Mammary epithelial cell (primary cell): ENCODE measurements at regions of chr6 and their contacts with region 1.

Region 1: DNA sequence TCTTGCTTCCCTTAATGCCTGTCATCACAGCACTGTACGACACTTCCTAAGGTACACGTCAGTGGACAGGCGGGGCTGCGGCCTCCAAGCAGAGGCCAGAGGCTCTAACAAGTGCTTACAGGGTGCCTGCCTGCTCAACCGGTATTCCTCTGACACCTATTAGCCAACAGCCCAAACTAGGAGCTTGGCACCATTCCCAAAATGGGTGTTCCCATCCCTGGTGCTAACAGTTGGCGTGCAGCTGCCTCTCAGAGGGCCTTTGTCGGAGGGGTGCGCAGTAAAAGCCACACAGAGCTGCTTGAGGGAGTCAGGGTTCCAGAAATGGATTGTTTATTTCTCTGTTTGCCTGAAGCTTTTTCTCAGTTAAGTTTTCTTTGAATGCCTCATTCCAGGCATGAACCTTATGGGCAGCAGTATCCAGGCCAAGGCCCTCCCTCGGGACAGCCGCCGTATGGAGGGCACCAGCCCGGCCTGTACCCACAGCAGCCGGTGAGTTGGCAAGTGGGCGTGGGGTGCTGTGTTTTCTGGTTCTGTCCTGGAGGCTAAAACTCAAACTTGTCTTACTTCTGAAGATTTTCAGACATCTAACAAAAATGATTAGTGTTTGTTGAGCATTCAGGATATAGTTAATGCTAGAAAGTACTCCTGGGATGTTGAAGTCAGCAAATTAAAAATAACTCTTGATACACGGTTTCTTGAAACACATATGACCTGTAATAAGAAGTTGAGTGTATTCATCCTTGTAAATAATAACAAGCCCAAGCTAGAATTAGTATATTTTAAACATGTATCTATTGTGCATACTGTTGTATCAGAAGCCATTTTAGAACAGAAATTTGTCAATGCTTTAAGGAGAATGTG is 124.7 kb downstream of the TMEM242 start:
- DNase-seq: peak; percentile 97
- H3K4me3 ChIP-seq: peak overlapping the region; percentile 1 to 16 (median 16)
- H3K27ac ChIP-seq: peak overlapping the region; percentile 11
- H3K4me1 ChIP-seq: peaks cover 9% of the 10 kb centered on the region
- H3K27me3 ChIP-seq: no peaks in the 10 kb centered on the region
- CTCF ChIP-seq: no peak

Region 2: DNA sequence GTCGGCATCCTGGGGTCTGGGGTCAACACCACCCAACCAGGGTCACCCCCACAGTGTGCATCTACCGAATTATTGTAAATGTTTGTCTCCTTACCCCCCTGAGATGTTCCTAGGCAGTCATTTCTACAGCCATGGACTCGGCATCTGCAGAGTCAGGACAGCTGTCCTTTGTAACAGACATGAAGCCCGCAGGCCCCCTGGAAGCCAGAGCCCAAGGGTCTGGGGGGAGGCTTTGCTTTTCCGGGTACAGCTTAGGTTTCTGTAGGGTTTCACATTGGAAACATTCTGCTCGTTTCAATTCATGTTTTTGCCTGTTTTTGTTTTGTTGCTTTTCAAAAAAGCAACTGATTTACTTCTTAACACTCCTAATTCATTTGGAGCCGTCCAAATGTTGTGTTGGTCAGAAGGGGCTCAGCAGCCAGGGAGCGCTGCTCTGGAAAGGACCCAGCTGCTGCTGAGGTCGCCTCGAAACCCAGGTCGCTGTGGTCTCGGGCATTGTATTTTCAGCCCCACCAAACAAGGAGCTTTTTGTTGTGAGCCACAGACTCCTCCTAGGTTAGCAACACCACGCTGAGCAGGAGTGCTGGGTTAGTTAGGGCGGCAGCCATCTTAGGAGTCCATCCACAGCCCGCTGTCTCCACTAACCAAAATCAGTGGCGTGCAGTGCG is 35.7 kb before region 1 on chr6:
- CTCF ChIA-PET with region 1: no interaction called
- dilution Hi-C with region 1: no loop called
- in situ Hi-C with region 1: no loop called
- intact Hi-C with region 1: no loop called
- DNase-seq: no peak
- H3K4me3 ChIP-seq: no peak overlapping the region
- H3K27ac ChIP-seq: no peak overlapping the region
- H3K4me1 ChIP-seq: no peaks in the 10 kb centered on the region
- H3K27me3 ChIP-seq: no peaks in the 10 kb centered on the region
- CTCF ChIP-seq: no peak

Region 3: DNA sequence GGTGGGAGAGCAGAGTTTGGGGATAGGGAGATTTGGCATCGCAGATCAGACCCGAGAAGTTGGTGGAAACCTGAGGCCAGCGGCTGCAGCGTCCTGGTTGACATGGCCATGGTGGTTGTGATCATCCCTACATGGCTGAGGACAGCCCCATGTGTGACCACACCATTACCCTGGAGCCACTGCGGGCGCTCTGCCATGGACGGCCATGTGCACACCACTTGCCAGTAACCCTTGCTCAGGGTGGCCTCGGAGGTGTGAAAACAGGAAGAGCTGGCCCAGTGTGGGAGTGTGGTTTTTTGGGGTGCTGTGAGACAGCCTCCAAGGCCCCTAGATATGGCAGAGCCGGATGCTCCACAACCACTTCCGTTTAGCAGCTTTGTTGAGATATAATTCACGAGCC is 60.2 kb after region 1 on chr6:
- CTCF ChIA-PET with region 1: no interaction called
- dilution Hi-C with region 1: loop called (anchors 10 kb)
- in situ Hi-C with region 1: no loop called
- intact Hi-C with region 1: no loop called
- DNase-seq: no peak
- H3K4me3 ChIP-seq: no peak overlapping the region
- H3K27ac ChIP-seq: no peak overlapping the region
- H3K4me1 ChIP-seq: peaks cover 13% of the 10 kb centered on the region
- H3K27me3 ChIP-seq: no peaks in the 10 kb centered on the region
- CTCF ChIP-seq: no peak